ENCODE measurements at regions of chr4 and their contacts with region 1.

Region 1: DNA sequence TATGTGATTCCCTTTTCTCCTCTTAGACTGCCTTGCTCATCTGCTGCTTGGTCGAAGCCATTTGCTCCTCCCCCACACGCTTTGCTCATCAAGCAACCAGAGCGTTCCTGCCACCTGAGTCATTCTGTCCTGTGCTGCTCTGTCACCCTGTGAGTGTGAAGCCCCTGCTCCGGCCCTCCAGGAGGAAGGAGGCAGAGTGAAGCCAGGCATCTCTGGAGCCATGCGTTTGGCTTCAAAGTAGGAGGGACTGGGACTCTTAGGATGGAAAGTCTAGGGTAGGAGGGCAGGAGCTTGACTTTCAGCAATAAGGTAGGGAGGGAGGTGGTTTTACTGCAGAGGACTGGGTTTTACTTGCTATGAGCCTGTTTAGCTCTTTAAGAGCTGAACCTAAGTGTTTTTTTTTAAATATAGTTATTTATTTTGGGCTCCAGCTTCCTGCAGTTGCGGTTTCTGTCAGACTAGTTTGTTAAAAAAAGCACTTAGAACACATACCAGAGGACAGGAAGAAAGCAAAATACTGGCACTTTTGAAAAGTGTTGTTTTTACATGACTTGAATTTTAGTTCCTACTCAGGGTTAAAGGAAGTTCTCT is 63.6 kb downstream of the SPINK2 start:
- DNase-seq: peak; percentile 92
- H3K4me3 Mint-ChIP-seq: peak overlapping the region; percentile 57
- H3K27ac Mint-ChIP-seq: peak overlapping the region; percentile 89
- H3K4me1 Mint-ChIP-seq: peaks cover 26% of the 10 kb centered on the region
- H3K27me3 Mint-ChIP-seq: no peaks in the 10 kb centered on the region

Region 2: DNA sequence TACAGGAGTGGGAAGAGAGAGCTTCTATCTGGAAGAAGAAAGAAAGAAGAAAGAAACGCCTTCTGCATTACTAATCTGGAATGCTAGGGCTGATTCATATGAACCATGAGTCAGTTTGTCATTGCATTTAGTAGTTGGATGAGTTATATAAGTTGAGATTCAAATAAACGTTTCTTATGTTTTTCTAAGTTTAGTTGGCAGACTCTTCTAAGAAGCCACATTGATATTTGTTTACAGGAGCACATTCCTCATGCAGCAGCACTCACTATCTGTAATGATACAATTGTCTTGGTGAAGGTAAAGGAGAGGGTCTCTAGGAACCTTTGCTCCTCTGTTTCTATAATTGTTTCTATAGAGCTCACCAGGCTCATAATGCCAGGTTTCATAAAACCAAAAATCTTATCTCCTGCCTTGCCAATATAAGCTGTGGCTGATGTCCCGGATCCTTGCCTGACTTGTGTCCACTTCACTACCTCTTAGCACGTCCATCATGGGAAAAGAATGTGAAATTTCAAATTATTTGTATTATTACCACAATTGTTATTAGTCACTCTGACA is 116.3 kb before region 1 on chr4:
- CTCF ChIA-PET with region 1: no interaction called
- intact Hi-C with region 1: loop called (anchors 1 kb)
- DNase-seq: no peak
- H3K4me3 Mint-ChIP-seq: no peak overlapping the region
- H3K27ac Mint-ChIP-seq: peak overlapping the region; percentile 60
- H3K4me1 Mint-ChIP-seq: peaks cover 17% of the 10 kb centered on the region
- H3K27me3 Mint-ChIP-seq: peaks cover 8% of the 10 kb centered on the region

Region 3: DNA sequence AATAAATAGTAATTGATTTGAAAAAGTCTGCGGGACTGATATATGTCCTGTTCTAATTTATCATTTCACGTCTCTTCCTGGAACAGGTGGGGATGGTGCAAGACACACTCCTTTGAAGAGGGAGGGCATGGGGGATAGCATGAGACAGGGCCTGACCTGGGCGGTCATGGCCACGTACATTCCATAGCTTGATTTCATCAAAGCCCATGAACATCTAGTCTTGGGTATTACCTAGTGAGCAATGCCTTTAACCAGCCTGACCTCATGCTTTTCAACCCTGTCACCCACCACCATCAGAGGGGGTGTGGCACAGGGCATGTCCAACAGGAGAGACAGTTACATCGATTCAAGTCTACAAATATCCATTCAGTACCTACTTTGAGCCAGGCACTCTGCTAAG is 24.6 kb before region 1 on chr4:
- CTCF ChIA-PET with region 1: no interaction called
- intact Hi-C with region 1: no loop called
- DNase-seq: no peak
- H3K4me3 Mint-ChIP-seq: no peak overlapping the region
- H3K27ac Mint-ChIP-seq: no peak overlapping the region
- H3K4me1 Mint-ChIP-seq: no peaks in the 10 kb centered on the region
- H3K27me3 Mint-ChIP-seq: no peaks in the 10 kb centered on the region

Region 4: GRCh38 chr4:56783986-56784385 is 26.1 kb after region 1 on chr4:
- CTCF ChIA-PET with region 1: no interaction called
- intact Hi-C with region 1: loop called (anchors 2 kb)
- DNase-seq: no peak
- H3K4me3 Mint-ChIP-seq: no peak overlapping the region
- H3K27ac Mint-ChIP-seq: no peak overlapping the region
- H3K4me1 Mint-ChIP-seq: no peaks in the 10 kb centered on the region
- H3K27me3 Mint-ChIP-seq: no peaks in the 10 kb centered on the region

Region 5: GRCh38 chr4:56813358-56813757 is 55.4 kb after region 1 on chr4:
- CTCF ChIA-PET with region 1: no interaction called
- intact Hi-C with region 1: no loop called
- DNase-seq: no peak
- H3K4me3 Mint-ChIP-seq: no peak overlapping the region
- H3K27ac Mint-ChIP-seq: no peak overlapping the region
- H3K4me1 Mint-ChIP-seq: peaks cover 12% of the 10 kb centered on the region
- H3K27me3 Mint-ChIP-seq: no peaks in the 10 kb centered on the region

Region 6: DNA sequence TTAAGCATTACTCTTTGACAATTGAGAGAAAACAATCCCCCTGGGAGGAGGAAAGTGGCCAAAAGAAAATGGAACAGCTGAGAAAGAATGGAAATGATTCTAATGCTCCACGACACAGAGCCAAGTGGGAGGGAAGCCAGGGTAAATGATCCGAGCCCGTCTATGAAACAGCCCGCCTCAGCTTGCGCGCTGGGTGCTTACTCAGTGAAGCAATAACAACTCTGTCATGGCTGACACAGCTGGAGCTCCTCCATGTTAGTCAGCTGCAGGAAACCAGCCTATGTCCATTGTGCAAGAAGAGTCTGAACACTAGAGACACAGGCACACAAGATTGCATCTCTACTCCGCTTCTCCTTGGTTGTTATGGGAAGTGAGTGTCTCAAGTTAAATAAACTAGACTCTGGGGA is 200.2 kb after region 1 on chr4:
- CTCF ChIA-PET with region 1: no interaction called
- intact Hi-C with region 1: no loop called
- DNase-seq: no peak
- H3K4me3 Mint-ChIP-seq: no peak overlapping the region
- H3K27ac Mint-ChIP-seq: no peak overlapping the region
- H3K4me1 Mint-ChIP-seq: peaks cover 1% of the 10 kb centered on the region
- H3K27me3 Mint-ChIP-seq: no peaks in the 10 kb centered on the region

Region 7: DNA sequence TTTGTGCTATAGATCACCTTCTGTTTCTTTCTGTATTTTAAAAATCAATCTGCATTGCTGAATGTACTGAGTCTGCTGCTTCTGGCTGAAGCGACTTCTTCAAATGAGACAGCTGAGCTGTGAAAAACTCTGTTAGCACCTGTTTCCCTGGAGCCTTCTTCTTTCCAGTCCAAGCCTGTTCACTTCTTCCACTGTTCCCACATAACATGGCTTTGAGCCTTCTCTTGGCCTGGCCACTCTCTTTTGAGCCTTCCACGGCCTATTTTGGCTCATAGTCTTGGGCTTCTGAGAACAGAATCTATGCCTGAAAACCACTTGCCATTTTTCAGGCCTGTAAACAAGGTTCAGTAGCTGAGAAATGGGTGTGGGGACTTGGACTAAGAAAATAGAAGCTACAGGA is 485.2 kb after region 1 on chr4:
- CTCF ChIA-PET with region 1: no interaction called
- intact Hi-C with region 1: no loop called
- DNase-seq: no peak
- H3K4me3 Mint-ChIP-seq: no peak overlapping the region
- H3K27ac Mint-ChIP-seq: no peak overlapping the region
- H3K4me1 Mint-ChIP-seq: no peaks in the 10 kb centered on the region
- H3K27me3 Mint-ChIP-seq: no peaks in the 10 kb centered on the region